Naive thymus-derived CD8-positive, alpha-beta T cell (primary cell): ENCODE measurements at regions of chr19 and their contacts with region 1.

Region 1: DNA sequence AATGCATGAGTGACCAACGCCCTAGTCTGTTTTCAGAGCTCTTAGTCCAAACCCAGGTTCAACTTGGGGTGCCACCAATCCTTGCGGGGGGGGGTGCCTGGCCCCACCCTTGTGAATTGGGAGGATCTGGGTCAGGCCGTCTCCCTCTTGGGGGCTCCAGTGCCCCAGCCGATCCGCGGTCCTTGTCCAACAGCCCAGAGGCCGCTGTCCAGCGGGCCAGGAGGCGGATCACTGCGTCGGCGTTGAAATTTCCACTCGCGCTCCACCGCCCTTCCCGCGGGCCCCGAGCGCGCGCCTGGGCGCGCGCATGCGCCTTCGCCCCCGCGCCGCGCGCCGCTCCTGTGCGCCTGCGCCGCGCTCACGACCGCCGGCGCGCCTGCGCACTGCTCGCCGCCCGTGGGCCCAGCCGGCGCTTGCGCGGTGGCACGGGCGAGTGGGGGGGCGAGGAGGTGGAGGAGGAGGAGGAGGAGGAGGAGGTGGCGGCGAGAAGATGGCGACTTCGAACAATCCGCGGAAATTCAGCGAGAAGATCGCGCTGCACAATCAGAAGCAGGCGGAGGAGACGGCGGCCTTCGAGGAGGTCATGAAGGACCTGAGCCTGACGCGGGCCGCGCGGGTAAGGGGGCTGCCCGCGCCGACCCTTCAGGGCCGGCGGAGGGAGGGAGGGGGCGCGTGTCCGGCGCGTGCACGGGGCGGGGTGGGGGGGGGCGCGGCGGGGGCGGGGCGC is at the start of gene CRTC1:
- DNase-seq: peak; percentile 91 to 96 (median 95)
- ATAC-seq: peak; percentile 86
- H3K4me3 Mint-ChIP-seq: peak within 1 kb of the TSS; percentile 80 to 94 (median 86)
- H3K27ac Mint-ChIP-seq: peak within 1 kb of the TSS; percentile 40 to 96 (median 91)
- H3K4me1 Mint-ChIP-seq: peaks cover 13 to 51% (median 30%) of the 10 kb centered on the region in 4 donors
- H3K27me3 Mint-ChIP-seq: no peaks in the 10 kb centered on the region
- polyA plus RNA-seq, gene CRTC1: 1.2 to 2.0 (median 1.9) TPM

Region 2: GRCh38 chr19:18660052-18660910 is 23.1 kb before region 1 on chr19:
- POLR2A ChIA-PET with region 1: no interaction called
- DNase-seq: no peak
- ATAC-seq: no peak
- H3K4me3 Mint-ChIP-seq: no peak overlapping the region
- H3K27ac Mint-ChIP-seq: peak overlapping the region in 2 of 10 donors; percentile 43 to 46
- H3K4me1 Mint-ChIP-seq: peaks cover 35 to 49% (median 42%) of the 10 kb centered on the region in 4 donors
- H3K27me3 Mint-ChIP-seq: no peaks in the 10 kb centered on the region

Region 3: DNA sequence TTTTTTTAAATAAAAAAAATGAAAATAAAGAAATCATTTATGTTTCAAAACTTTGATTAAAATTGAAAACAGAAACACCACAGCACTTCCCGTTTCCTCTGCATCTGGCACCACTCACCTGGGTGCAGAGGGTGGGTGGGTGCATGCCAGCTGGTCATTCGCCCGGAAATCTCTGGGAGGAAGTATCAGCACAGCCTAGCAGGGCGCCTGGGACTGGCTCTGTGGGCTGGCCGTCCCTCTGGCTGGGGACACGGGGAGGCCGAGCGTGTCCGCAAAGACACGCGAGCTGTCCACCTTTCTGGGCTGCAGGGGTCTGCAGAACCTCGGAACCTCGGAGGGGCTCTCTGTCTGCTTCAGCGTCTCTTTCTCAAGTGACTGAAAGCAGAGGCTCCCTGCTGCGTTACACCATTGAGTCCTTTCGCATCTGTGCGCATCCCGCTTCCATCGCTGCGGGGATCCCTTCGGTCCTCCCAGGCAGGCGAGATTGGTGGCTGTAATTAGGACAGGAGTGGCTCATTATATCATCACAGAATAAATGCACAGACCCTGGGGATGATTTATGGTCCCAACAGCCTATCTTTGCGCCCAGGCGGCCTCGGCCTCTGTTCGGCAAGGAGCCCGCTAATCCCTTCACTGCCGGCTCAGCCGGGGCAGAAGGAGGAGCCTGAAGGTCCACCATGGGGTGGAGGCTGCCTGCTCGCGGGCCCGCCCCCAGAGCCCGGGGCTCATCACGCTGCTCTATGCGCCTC is 17.3 kb after region 1 on chr19:
- POLR2A ChIA-PET with region 1: interaction called, 13 read pairs
- DNase-seq: peak; percentile 54 to 83 (median 64)
- ATAC-seq: peak; percentile 94 to 95
- H3K4me3 Mint-ChIP-seq: peak overlapping the region; percentile 85 to 95 (median 90)
- H3K27ac Mint-ChIP-seq: peak overlapping the region; percentile 91 to 98 (median 96)
- H3K4me1 Mint-ChIP-seq: peaks cover 21 to 59% (median 46%) of the 10 kb centered on the region in 4 donors
- H3K27me3 Mint-ChIP-seq: no peaks in the 10 kb centered on the region

Region 4: DNA sequence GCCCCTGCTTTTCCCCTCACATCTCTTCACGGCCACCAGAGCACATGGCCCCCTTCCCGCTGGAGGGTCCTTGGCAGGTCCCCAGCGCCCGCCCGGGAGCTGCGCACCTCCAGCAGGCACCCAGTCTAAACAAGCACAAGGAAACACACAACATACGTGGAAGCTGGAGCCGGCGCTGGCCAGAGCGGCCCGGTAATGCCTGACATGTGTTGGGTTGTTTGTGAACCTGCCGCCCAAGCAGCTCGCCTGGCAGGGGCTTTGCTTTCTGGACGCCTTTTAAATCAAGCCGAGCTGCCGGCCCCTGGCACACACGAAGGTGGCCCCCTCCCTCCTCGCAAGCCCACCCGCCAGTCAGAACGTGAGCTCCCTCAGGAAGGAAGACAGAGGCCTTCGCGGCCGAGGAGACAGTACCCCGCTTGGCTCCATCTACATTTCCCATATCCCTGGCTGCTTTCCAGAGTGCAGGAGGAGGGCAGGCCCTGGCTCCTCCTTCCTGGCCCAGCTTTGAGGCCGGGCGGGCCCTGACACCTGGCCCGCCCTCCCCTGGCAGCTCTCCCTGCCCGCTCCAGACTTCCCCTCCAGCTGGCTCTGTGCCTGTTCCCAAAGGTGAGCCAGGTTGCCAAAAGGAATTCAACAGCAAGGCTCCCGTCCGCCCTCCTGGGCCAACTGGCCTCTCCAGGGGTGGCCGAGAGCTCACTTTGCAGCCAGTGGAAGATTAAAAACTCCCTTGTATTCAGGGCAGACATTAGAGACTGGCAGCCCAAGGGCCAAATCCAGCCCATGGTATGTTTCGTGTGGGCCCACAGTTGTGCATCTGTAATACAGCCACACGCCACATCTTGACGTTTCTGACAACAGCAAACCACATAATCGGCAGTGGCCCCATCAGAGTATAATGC is 79.0 kb after region 1 on chr19:
- POLR2A ChIA-PET with region 1: no interaction called
- DNase-seq: no peak
- ATAC-seq: no peak
- H3K4me3 Mint-ChIP-seq: no peak overlapping the region
- H3K27ac Mint-ChIP-seq: no peak overlapping the region
- H3K4me1 Mint-ChIP-seq: peaks cover 0 to 2% (median under 1%) of the 10 kb centered on the region in 4 donors
- H3K27me3 Mint-ChIP-seq: no peaks in the 10 kb centered on the region